Caco-2 (cell line): ENCODE measurements at regions of chr17 and their contacts with region 1.

Region 1: GRCh38 chr17:51120739-51121617 is at the start of gene SPAG9:
- DNase-seq: peak; percentile 97
- H3K4me3 ChIP-seq: peak within 1 kb of the TSS; percentile 81
- H3K4me3 Mint-ChIP-seq: peak within 1 kb of the TSS; percentile 96
- H3K27ac Mint-ChIP-seq: peak within 1 kb of the TSS; percentile 99
- H3K4me1 ChIP-seq: peaks cover 36% of the 10 kb centered on the region
- H3K4me1 Mint-ChIP-seq: peaks cover 31% of the 10 kb centered on the region
- H3K27me3 ChIP-seq: no peaks in the 10 kb centered on the region
- H3K27me3 Mint-ChIP-seq: no peaks in the 10 kb centered on the region
- CTCF ChIP-seq: no peak
- total RNA-seq, gene SPAG9: 130 and 142 TPM in 2 replicates

Region 2: GRCh38 chr17:51153210-51154072 is 32.5 kb after region 1 on chr17 and contains the start of gene NME1:
- CTCF ChIA-PET with region 1: interaction called, 20 read pairs
- POLR2A ChIA-PET with region 1: interaction called, 42 read pairs
- intact Hi-C with region 1: loop called (anchors 1 kb)
- DNase-seq: peak; percentile 98 to 99
- H3K4me3 ChIP-seq: peak within 1 kb of the TSS; percentile 69
- H3K4me3 Mint-ChIP-seq: no peak within 1 kb of the TSS
- H3K27ac Mint-ChIP-seq: no peak within 1 kb of the TSS
- H3K4me1 ChIP-seq: peaks cover 9% of the 10 kb centered on the region
- H3K4me1 Mint-ChIP-seq: no peaks in the 10 kb centered on the region
- H3K27me3 ChIP-seq: no peaks in the 10 kb centered on the region
- H3K27me3 Mint-ChIP-seq: no peaks in the 10 kb centered on the region
- CTCF ChIP-seq: peak; percentile 65 to 89
- total RNA-seq, gene NME1: 278 and 336 TPM in 2 replicates